ENCODE measurements at regions of chr15 and their contacts with region 1.

Region 1: DNA sequence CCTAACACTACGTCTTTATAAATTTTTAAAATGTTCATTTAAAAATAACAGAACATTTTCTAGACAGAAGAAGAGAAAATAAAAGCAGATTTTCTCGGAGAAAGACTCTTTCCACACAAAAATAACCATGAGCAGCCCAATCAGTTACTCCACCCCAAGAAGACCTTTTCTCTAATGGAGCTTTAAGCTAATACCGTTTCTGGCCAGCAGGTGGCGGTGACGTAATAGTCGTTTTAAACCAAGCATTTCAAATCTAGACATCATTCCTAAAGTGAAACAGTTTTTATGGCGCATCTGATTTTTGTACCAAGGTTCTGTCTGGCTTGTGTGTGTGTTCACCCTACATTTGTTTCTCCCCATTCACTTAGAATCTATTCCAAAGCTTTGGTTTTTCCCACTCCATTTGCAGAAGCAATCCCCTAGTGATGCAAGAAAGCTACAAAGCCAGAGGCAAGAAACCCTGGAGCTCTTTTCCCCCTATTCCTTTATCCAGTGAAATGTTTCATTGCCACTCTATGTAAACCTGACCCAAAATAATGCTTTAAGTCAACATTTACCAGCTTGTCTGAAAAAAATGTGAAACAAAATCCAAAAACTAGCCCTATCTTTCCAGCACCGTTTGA is 336.7 kb upstream of the IGF1R start:
- DNase-seq: peak; percentile 95
- H3K4me3 ChIP-seq: no peak overlapping the region
- H3K27ac ChIP-seq: no peak overlapping the region
- H3K4me1 ChIP-seq: no peaks in the 10 kb centered on the region
- H3K27me3 ChIP-seq: no peaks in the 10 kb centered on the region
- CTCF ChIP-seq: peak; percentile 84 to 95 (median 86)
- POLR2A ChIP-seq: no peak

Region 2: DNA sequence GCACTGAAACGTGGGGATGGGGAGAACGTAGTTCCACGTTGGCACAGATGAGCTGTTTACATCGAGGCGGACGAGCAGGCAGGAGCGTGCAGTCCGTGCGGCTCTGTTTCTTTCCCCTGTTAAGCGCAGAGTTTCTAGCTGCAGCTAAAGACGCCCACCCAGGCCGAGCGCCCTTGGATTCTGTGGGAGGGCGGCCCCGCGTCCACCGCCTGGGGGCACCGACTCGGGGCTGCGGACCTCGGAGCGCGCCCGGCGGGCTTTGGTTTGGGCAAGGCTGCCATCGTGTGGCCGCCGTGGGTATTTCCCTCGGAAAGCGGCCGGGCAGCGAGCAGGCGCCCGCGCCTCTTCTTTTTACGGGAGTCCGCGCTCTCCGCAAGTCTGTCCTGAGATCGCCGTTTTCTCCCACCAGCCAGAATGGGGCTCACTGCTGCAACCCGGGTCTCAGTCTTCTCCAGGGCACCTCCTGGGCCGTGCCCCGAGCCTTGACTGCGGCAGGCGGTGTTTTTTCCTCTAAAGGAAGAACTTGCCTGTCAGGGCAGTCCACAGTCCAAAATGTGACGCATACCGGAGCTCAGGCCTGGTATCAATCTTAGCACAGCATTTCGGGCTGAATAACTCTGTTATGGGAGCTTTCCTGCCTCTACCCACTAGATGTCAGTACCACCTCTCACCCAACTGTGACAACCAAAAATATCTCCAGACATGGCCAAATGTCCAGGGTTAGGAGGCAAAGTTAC is 116.7 kb after region 1 on chr15:
- intact Hi-C with region 1: loop called (anchors 10 kb)
- DNase-seq: peak; percentile 85
- H3K4me3 ChIP-seq: peak overlapping the region; percentile 42 to 55
- H3K27ac ChIP-seq: no peak overlapping the region
- H3K4me1 ChIP-seq: no peaks in the 10 kb centered on the region
- H3K27me3 ChIP-seq: no peaks in the 10 kb centered on the region
- CTCF ChIP-seq: peak; percentile 71 to 86 (median 84)
- POLR2A ChIP-seq: no peak

Measured in testis (tissue), 5 donors.